Mucosa of descending colon (tissue), 3 donors: ENCODE measurements at regions of chr5 and their contacts with region 1.

Region 1: DNA sequence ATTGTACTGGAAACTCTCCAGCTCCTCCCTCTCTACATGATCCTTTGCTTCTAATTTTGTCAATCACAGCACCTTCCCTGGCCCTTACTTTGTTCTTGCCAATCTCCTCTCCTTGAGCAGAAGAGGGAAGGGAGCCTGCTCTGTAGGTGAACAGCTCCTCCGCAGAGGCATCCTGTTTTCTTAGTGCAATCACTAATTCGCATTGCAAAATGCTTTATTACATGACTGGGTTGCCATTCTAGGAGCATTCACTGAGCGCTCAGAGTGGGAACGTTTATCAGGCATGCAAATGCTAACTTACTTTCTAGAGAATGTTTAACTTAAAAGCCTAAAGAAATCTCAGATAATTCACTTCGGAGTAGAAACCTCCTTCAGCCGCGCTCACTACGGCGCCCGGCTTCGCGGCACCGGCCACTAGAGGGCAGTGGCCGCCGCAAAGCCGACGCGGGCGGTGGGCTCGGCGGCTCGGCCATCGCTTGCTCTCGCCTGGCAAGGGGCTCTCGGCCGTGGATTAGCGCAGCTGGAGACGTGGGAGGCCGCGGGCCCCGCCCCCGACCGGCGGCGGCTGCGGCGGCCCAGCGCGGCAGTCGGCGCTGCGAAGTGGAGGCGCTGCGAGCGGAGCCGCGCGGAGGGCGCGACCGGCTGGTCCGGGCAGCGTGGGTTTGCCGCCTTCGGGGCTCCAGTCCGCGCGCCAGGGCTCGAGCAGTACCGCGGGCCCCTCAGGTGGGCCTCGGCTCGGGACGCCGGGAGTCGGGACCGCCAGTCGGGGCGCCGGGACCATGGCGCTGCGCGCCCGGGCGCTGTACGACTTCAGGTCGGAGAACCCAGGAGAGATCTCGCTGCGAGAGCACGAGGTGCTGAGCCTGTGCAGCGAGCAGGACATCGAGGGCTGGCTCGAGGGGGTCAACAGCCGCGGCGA is at the start of gene SNX18:
- DNase-seq: peak; percentile 91 to 95 (median 94)
- ATAC-seq: peak; percentile 96
- H3K4me3 ChIP-seq: peak within 1 kb of the TSS; percentile 93
- H3K4me1 ChIP-seq: peaks cover 36% of the 10 kb centered on the region
- CTCF ChIP-seq: peak; percentile 95
- total RNA-seq, gene SNX18: 8.7 to 28.9 (median 13.7) TPM

Region 2: GRCh38 chr5:54570916-54571315 is 53.5 kb after region 1 on chr5:
- intact Hi-C with region 1: no loop called
- DNase-seq: no peak
- ATAC-seq: no peak
- H3K4me3 ChIP-seq: no peak overlapping the region
- H3K4me1 ChIP-seq: no peaks in the 10 kb centered on the region
- CTCF ChIP-seq: no peak

Region 3: DNA sequence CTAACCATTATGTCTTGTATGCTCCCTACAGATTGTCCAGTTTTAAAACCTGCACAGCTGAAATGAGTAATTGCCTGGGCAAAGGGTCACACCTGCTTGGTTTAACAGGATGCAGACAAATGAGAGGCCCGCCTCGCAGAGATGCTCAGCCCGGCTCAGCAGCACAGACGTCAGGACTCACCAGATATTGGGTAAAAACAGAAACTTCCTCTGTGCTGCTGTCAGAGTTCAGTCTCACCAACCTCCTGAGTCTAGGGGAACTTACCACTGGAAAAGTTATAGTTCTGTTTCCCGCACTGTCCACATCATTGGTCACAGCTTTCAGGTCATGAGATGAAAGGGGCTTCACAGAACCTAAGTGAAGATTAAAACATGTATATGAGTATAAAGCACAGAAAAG is 315.4 kb after region 1 on chr5:
- intact Hi-C with region 1: no loop called
- DNase-seq: peak in 1 of 3 donors; percentile 51
- ATAC-seq: peak; percentile 62
- H3K4me3 ChIP-seq: no peak overlapping the region
- H3K4me1 ChIP-seq: no peaks in the 10 kb centered on the region
- CTCF ChIP-seq: no peak

Region 4: DNA sequence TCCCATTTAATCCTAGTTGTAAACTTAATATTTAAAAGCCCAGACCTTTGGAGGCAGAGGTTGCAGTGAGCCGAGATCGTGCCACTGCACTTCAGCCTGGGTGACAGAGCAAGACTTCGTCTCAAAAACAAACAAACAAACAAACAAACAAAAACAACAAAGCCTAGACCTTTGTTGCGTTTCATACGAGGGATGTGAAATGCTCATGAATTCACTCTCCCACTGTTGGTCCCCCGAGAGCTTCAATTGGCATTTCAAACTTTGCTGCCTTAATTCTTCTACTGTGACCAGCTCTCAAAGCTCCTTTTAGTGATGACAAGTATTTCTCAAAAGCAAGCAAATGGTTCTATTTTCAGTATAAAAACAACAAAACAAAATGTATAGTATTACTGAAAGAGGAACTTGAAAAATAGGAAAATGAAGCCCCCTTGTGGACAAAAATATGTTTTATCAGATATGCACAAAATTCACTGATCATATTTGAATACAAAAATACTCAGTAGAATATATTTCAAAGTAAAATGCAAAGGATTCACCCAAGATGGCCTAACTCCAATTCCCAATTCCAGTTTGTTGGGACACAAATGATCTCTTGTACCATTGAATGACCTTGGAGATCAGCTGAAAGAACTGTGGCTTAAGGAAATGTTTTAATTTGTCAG is 327.6 kb after region 1 on chr5:
- intact Hi-C with region 1: loop called (anchors 2 to 5 kb)
- DNase-seq: peak in 1 of 3 donors; percentile 3
- ATAC-seq: no peak
- H3K4me3 ChIP-seq: no peak overlapping the region
- H3K4me1 ChIP-seq: no peaks in the 10 kb centered on the region
- CTCF ChIP-seq: peak; percentile 26